Activated CD4-positive, alpha-beta memory T cell treated with anti-CD3 and anti-CD28 coated beads, Interleukin-2, amount 10 ng/mL, durations not matched to agents 7 days and 5 days (primary cell): ENCODE measurements at regions of chr17 and their contacts with region 1.

Region 1: GRCh38 chr17:75109407-75110233 is at the start of gene ARMC7:
- DNase-seq: peak; percentile 92
- H3K4me3 Mint-ChIP-seq: peak within 1 kb of the TSS; percentile 84
- H3K27ac Mint-ChIP-seq: peak within 1 kb of the TSS; percentile 79
- H3K4me1 Mint-ChIP-seq: peaks cover 41% of the 10 kb centered on the region
- H3K27me3 Mint-ChIP-seq: no peaks in the 10 kb centered on the region
- total RNA-seq, gene ARMC7: 17.1 to 17.9 TPM

Region 2: DNA sequence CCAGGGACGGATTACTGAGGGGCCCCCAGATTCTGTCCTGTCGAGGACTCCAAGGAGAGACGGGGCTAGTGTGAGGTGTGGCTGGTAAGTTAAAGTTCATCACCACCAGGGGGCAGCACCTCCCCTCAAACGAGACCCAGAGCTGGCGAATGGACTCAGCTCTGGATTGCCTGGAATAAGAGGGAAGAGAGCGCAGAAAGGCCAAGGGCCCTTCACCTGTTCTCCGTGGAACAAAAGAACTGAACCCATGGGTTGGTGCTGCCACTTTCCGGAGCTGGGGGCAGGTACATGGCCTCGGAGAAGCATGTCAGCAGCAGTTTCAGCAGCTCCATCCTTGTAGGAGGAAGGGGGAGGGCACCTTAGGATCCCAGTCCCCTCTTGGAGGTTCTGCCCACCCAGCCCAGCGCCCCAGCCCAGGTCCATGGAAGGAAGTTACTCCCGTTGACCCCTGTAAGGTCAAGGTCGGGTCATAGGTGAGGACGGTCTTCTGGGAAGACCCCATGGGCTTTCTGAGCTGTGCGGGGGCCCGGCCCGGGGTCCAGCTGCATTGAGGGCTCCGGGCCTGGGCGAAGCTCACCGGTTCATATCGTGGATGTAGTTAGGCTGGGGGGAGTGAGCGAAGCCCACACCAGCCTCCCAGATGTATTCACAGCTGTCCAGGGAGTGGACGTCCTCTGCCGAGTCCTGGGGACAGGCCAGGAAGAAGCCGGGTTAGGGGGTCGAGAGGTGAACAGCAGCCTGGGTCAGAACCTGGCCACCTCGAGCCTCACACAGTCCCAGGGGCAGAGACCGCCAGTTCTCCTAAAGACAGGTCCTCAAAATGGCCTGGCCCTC is 147.7 kb before region 1 on chr17:
- CTCF ChIA-PET with region 1: interaction called, 39 read pairs
- POLR2A ChIA-PET with region 1: interaction called, 5 read pairs
- DNase-seq: peak; percentile 86
- H3K4me3 Mint-ChIP-seq: no peak overlapping the region
- H3K27ac Mint-ChIP-seq: no peak overlapping the region
- H3K4me1 Mint-ChIP-seq: peaks cover 7% of the 10 kb centered on the region
- H3K27me3 Mint-ChIP-seq: peaks cover 5% of the 10 kb centered on the region

Region 3: GRCh38 chr17:75069783-75070182 is 39.8 kb before region 1 on chr17:
- CTCF ChIA-PET with region 1: interaction called, 16 read pairs
- POLR2A ChIA-PET with region 1: interaction called, 3 read pairs
- DNase-seq: no peak
- H3K4me3 Mint-ChIP-seq: no peak overlapping the region
- H3K27ac Mint-ChIP-seq: no peak overlapping the region
- H3K4me1 Mint-ChIP-seq: peaks cover 38% of the 10 kb centered on the region
- H3K27me3 Mint-ChIP-seq: no peaks in the 10 kb centered on the region

Region 4: GRCh38 chr17:75142239-75142971 is 32.8 kb after region 1 on chr17:
- CTCF ChIA-PET with region 1: interaction called, 13 read pairs
- POLR2A ChIA-PET with region 1: interaction called, 4 read pairs
- DNase-seq: no peak
- H3K4me3 Mint-ChIP-seq: no peak overlapping the region
- H3K27ac Mint-ChIP-seq: peak overlapping the region; percentile 84
- H3K4me1 Mint-ChIP-seq: peaks cover 29% of the 10 kb centered on the region
- H3K27me3 Mint-ChIP-seq: no peaks in the 10 kb centered on the region

Region 5: DNA sequence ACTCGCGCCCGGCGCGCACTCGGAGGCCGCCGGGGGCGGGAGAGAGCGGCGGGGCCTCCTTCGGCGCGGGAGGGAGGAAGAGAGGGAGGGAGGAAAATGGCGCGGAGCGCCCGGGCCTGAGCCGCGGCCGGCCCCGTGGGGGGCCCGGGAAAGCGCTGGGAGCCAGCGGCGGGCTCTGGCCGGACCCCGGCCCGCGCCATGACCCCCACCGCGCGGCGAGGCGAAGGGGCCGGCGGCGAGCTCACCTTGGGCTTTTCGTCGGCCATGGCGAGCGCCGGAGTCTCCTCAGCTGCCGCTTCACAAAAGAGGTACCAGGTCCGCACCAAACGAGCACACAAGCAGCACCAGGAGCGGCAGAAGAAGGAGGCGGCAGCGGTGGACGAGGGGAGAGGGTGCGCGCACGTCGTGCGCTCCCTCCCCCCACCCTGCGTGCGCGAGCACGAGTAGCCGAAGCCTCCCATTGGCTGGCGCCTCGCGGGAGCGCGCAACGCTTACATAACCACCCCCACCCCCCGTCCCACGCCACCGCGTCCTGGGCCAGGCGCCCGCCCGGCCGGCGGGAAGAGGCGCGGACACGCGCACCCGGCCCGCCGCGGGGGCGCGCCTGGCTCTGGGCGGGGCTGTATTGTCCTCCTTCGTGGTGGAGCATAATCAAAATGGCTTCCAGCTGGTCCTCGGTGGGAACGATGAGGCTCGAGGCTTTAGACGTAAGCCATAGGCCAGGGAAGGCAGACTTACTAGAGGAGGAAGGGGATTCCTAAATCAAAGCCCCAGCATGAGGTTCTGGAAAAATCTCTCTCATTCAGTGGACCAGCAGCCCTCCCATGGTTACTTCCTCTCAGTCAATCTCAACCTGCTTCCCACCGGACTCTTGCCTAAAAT is 73.2 kb after region 1 on chr17 and contains the start of gene SUMO2:
- CTCF ChIA-PET with region 1: interaction called, 17 read pairs
- POLR2A ChIA-PET with region 1: interaction called, 13 read pairs
- DNase-seq: peak; percentile 96
- H3K4me3 Mint-ChIP-seq: peak within 1 kb of the TSS; percentile 82
- H3K27ac Mint-ChIP-seq: peak within 1 kb of the TSS; percentile 99
- H3K4me1 Mint-ChIP-seq: peaks cover 45% of the 10 kb centered on the region
- H3K27me3 Mint-ChIP-seq: no peaks in the 10 kb centered on the region
- total RNA-seq, gene SUMO2: 548 to 559 TPM

Region 6: GRCh38 chr17:75261336-75262111 is 151.9 kb after region 1 on chr17 and contains the starts of genes GGA3 and MRPS7:
- CTCF ChIA-PET with region 1: interaction called, 14 read pairs
- POLR2A ChIA-PET with region 1: interaction called, 4 read pairs
- DNase-seq: peak; percentile 96
- H3K4me3 Mint-ChIP-seq: peak within 1 kb of the TSS; percentile 96
- H3K27ac Mint-ChIP-seq: peak within 1 kb of the TSS; percentile 99
- H3K4me1 Mint-ChIP-seq: peaks cover 53% of the 10 kb centered on the region
- H3K27me3 Mint-ChIP-seq: no peaks in the 10 kb centered on the region
- total RNA-seq, gene GGA3: 73.4 to 79.4 TPM
- total RNA-seq, gene MRPS7: 39.7 to 40.0 TPM